ENCODE measurements at regions of chr15 and their contacts with region 1.

Region 1: DNA sequence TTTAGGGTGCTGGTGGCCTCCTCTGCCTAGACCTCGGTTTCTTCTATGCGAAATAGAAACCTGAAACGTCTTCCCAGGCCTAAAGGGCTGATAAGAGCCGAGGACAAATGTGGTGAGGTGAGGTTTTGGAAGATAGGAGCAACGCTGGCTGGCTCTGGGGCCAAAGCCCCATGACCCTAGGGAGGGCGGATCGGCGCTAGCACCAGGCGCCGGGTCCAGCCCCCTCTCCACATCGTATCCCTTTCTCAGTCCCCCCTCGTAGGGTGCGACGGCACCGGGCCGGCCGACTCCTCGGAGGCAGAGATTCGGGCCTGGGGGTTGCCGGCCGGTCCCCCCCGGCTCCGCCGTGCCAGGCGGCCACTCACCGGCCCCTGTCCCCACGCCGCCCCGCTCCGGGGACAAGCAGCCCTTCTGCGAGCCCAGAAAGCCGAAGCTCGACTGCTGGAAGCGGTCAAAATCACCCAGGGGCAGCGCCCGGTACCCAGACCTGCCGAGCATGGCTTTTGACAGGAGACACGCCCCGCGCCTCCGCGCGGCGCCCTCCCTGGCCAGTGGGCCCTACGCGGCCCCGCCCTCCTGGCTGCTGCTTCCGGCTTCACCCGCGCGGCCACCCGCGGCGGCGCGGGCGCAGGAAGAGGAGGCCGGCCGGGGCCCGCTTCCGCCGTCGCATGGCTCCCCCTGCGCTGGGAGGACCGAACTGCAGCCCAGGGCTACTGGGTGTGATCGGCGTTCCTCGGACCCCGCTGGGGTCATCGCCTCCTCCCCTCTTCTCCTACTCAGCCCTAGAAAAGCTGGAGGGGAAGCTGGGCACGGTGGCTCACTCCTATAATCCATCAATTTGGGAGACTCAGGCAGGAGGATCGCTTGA is at the start of gene STOML1:
- DNase-seq: peak; percentile 94
- ATAC-seq: peak; percentile 77
- H3K4me3 Mint-ChIP-seq: peak within 1 kb of the TSS; percentile 78
- H3K27ac Mint-ChIP-seq: peak within 1 kb of the TSS; percentile 83
- H3K4me1 Mint-ChIP-seq: peaks cover 33% of the 10 kb centered on the region
- H3K27me3 Mint-ChIP-seq: no peaks in the 10 kb centered on the region
- CTCF ChIP-seq: peak; percentile 95
- total RNA-seq, gene STOML1: 5.2 to 6.5 TPM

Region 2: DNA sequence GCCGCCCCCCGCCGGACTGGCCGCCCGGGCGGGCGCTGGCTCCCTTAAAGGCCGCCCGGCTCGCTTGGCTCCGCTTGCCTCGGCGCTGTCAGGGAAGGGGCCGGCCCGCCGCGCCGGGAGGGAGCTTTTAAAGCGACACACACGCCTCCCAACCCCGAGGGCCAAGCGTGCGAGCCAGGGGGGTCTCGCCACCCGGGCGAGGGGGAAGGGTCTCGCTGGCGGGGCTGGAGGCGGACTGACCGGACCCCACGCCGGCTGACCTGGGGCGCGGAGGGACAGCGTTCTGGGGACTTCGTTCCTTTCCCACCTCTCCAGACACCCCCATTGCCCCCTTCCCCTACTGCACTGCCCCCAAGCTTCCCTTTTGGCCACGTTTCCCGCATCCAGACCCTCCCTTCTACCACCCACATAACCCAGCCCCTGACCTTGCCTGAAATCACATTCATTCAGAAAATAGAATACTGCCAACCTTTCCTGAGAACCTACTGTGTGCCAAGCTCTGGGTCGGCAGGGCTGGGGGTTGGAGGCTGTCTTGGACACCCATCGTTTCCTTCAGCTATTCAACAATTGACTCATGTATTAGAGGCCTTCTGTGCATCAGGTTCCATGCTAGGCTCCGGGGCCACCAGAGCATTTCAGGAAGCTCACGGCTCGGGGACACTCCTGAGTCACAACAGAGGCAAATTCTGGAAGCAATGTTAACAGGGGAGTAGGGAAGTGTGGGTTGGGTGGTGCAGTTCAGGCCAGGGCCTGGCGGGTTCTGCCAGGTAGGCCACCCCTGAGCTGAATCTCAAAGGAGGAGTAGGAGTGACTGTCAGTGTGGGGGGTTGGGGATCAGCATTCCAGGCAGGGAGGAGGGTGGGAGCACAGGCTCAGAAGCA is 238.5 kb before region 1 on chr15 and contains the start of gene INSYN1:
- CTCF ChIA-PET with region 1: no interaction called
- POLR2A ChIA-PET with region 1: no interaction called
- intact Hi-C with region 1: no loop called
- DNase-seq: no peak
- ATAC-seq: no peak
- H3K4me3 Mint-ChIP-seq: no peak within 1 kb of the TSS
- H3K27ac Mint-ChIP-seq: no peak within 1 kb of the TSS
- H3K4me1 Mint-ChIP-seq: no peaks in the 10 kb centered on the region
- H3K27me3 Mint-ChIP-seq: peaks cover 46% of the 10 kb centered on the region
- CTCF ChIP-seq: no peak
- total RNA-seq, gene INSYN1: not detected

Region 3: GRCh38 chr15:73964736-73965093 is 27.2 kb before region 1 on chr15:
- CTCF ChIA-PET with region 1: interaction called, 11 read pairs
- POLR2A ChIA-PET with region 1: no interaction called
- intact Hi-C with region 1: no loop called
- DNase-seq: peak; percentile 96
- ATAC-seq: peak; percentile 89
- H3K4me3 Mint-ChIP-seq: peak overlapping the region; percentile 71
- H3K27ac Mint-ChIP-seq: peak overlapping the region; percentile 91
- H3K4me1 Mint-ChIP-seq: peaks cover 30% of the 10 kb centered on the region
- H3K27me3 Mint-ChIP-seq: no peaks in the 10 kb centered on the region
- CTCF ChIP-seq: peak; percentile 95

Region 4: GRCh38 chr15:74011610-74012009 is 19.6 kb after region 1 on chr15:
- CTCF ChIA-PET with region 1: interaction called, 30 read pairs
- POLR2A ChIA-PET with region 1: interaction called, 24 read pairs
- intact Hi-C with region 1: no loop called
- DNase-seq: no peak
- ATAC-seq: no peak
- H3K4me3 Mint-ChIP-seq: no peak overlapping the region
- H3K27ac Mint-ChIP-seq: no peak overlapping the region
- H3K4me1 Mint-ChIP-seq: peaks cover 45% of the 10 kb centered on the region
- H3K27me3 Mint-ChIP-seq: no peaks in the 10 kb centered on the region
- CTCF ChIP-seq: no peak

Region 5: DNA sequence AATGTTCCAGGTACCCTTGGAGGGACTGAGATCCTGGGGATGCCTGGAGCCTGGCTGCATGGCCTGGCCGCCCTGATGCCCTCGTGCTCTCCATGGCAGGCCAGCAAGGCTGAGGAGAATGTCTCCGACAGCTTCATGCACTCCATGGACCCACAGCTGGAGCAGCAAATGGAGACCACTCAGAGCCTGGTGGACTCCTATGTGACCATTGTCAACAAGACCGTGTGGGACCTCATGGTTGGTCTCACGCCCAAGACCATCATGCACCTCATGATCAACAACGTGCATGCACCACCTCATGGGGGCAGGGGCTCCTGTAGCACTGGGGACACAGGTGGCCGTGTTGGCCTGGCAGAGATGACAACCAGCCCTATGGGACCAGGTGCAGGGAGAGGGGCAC is 70.7 kb after region 1 on chr15:
- CTCF ChIA-PET with region 1: no interaction called
- POLR2A ChIA-PET with region 1: no interaction called
- intact Hi-C with region 1: no loop called
- DNase-seq: no peak
- ATAC-seq: no peak
- H3K4me3 Mint-ChIP-seq: no peak overlapping the region
- H3K27ac Mint-ChIP-seq: no peak overlapping the region
- H3K4me1 Mint-ChIP-seq: peaks cover 11% of the 10 kb centered on the region
- H3K27me3 Mint-ChIP-seq: peaks cover 3% of the 10 kb centered on the region
- CTCF ChIP-seq: no peak